AG04450 (cell line): ENCODE measurements at regions of chr11 and their contacts with region 1.

Region 1: DNA sequence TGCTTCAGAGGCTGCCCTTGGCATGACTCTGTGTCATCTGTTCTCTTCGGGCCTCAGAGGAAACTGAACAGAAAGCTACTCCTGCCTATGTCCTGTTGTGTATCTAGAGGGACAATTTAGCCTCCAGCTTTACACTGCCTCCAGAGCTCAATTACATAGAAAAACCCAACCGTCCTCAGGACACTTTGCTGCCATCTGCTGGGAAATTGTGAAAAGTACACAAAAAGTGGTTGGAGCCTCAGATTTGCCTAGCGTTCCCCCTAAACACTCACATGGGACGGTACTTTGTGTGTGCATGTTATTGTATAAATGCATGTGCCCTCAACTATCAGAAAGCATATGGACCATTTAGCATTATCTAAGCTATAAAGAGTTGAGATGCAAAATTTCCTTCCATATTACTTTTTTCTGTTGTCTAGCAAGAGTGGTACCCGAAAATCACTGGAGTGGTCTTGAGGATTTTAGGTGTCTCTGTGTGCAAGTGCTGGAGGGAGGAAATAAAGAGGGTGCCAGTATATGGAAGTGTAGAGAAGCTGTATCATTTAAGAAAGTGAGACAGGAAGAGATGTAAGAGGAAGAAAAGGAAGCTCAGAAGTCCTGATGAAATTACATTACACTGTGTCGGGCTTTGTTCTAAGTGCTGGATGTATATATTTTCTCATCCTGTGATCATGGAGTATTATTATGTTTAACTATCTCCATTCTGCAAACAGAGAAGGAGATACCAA is 8.7 kb upstream of the MS4A4E start:
- DNase-seq: no peak
- H3K4me3 ChIP-seq: no peak overlapping the region
- H3K27ac ChIP-seq: no peak overlapping the region
- H3K27me3 ChIP-seq: no peaks in the 10 kb centered on the region
- CTCF ChIP-seq: peak; percentile 41

Region 2: GRCh38 chr11:59822989-59823566 is 428.6 kb before region 1 on chr11:
- CTCF ChIA-PET with region 1: interaction called, 13 read pairs
- POLR2A ChIA-PET with region 1: no interaction called
- DNase-seq: peak; percentile 13
- H3K4me3 ChIP-seq: no peak overlapping the region
- H3K27ac ChIP-seq: no peak overlapping the region
- H3K27me3 ChIP-seq: peaks cover 2% of the 10 kb centered on the region
- CTCF ChIP-seq: peak; percentile 57

Region 3: GRCh38 chr11:60265373-60266214 is 13.9 kb after region 1 on chr11:
- CTCF ChIA-PET with region 1: interaction called, 10 read pairs
- POLR2A ChIA-PET with region 1: no interaction called
- DNase-seq: no peak
- H3K4me3 ChIP-seq: no peak overlapping the region
- H3K27ac ChIP-seq: no peak overlapping the region
- H3K27me3 ChIP-seq: no peaks in the 10 kb centered on the region
- CTCF ChIP-seq: peak; percentile 64